ENCODE measurements at regions of chr6 and their contacts with region 1.

Region 1: DNA sequence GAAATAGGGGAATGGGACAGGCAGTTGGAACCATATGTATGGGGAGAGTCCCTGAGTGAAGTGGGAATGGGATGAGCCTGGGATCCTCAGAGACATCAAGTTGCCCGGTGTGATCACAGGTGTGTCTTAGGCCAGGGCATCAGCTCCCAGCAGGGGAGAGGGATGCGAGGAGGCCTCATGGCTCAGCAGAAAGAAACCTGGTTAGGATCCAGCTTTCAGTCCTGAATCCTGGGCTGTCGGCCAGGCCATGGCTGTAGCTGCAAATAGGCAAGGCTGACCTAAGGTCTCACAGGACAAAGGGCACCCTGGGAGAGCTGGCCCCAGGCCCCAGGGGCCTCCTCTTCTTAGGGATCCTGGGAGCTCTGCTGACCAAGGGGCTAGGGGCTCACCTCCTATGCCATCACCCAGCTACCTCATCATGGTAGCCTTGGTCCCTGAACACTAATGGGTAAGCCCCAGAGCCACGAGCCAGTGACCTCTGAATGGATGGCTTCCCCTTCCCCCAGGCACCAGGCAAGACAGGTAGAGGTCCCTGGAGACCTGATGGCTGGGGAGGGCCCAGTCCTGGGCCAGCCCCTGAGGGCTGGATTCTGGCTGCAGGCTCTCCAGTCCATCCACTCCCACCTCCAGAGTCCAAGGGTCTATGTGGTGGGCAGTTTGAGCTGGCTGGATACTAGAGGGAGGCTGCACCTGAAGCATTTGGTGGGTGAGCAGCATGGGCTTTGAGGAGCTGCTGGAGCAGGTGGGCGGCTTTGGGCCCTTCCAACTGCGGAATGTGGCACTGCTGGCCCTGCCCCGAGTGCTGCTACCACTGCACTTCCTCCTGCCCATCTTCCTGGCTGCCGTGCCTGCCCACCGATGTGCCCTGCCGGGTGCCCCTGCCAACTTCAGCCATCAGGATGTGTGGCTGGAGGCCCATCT is at the start of gene SLC22A7:
- DNase-seq: no peak
- H3K4me3 ChIP-seq: no peak within 1 kb of the TSS
- H3K27ac ChIP-seq: no peak within 1 kb of the TSS
- H3K4me1 ChIP-seq: no peaks in the 10 kb centered on the region
- H3K27me3 ChIP-seq: peaks cover 0 to 2% (median 0%) of the 10 kb centered on the region in 4 experiments; a peak in 1 of 7 replicates
- CTCF ChIP-seq: no peak
- EP300 ChIP-seq: no peak
- POLR2A ChIP-seq: no peak
- RAD21 ChIP-seq: no peak
- total RNA-seq, gene SLC22A7: not detected in 2 replicates

Region 2: GRCh38 chr6:43211955-43212354 is 85.9 kb before region 1 on chr6:
- CTCF ChIA-PET with region 1: no interaction called
- POLR2A ChIA-PET with region 1: no interaction called
- DNase-seq: no peak
- H3K4me3 ChIP-seq: no peak overlapping the region
- H3K27ac ChIP-seq: no peak overlapping the region
- H3K4me1 ChIP-seq: no peaks in the 10 kb centered on the region; a peak in 1 of 7 replicates
- H3K27me3 ChIP-seq: no peaks in the 10 kb centered on the region
- CTCF ChIP-seq: peak in 1 of 3 experiments; percentile 43; a peak in 1 of 4 replicates
- EP300 ChIP-seq: no peak
- POLR2A ChIP-seq: no peak
- RAD21 ChIP-seq: peak; percentile 27 to 42; a peak in 2 of 4 replicates

Region 3: GRCh38 chr6:43263314-43264178 is 34.4 kb before region 1 on chr6:
- CTCF ChIA-PET with region 1: interaction called, 10 read pairs
- POLR2A ChIA-PET with region 1: no interaction called
- DNase-seq: peak; percentile 49 to 90
- H3K4me3 ChIP-seq: no peak overlapping the region
- H3K27ac ChIP-seq: no peak overlapping the region
- H3K4me1 ChIP-seq: peaks cover 0 to 15% (median 5%) of the 10 kb centered on the region in 4 experiments; a peak in 6 of 7 replicates
- H3K27me3 ChIP-seq: peaks cover 2 to 9% (median 7%) of the 10 kb centered on the region in 4 experiments
- CTCF ChIP-seq: peak in 2 of 3 experiments; percentile 91 to 98; a peak in 3 of 4 replicates
- EP300 ChIP-seq: no peak
- POLR2A ChIP-seq: no peak
- RAD21 ChIP-seq: peak; percentile 96 to 97

Region 4: GRCh38 chr6:43308101-43308989 is 10.4 kb after region 1 on chr6 and contains the start of gene CRIP3:
- CTCF ChIA-PET with region 1: interaction called, 18 read pairs
- POLR2A ChIA-PET with region 1: interaction called, 45 read pairs
- DNase-seq: peak; percentile 60 to 86
- H3K4me3 ChIP-seq: peak within 1 kb of the TSS; percentile 51 to 74 (median 66)
- H3K27ac ChIP-seq: no peak within 1 kb of the TSS
- H3K4me1 ChIP-seq: peaks cover 9 to 15% (median 9%) of the 10 kb centered on the region in 4 experiments
- H3K27me3 ChIP-seq: 0 out of 7 replicates have a peak, but pooled peaks cover 0 to 2% (median 0%) of the 10 kb centered on the region in 4 experiments
- CTCF ChIP-seq: peak in 2 of 3 experiments; percentile 51 to 76; a peak in 2 of 4 replicates
- EP300 ChIP-seq: no peak
- POLR2A ChIP-seq: peak in 1 of 2 experiments; percentile 57; a peak in 2 of 3 replicates
- RAD21 ChIP-seq: peak; percentile 31 to 48; a peak in 3 of 4 replicates
- total RNA-seq, gene CRIP3: 37.6 and 46.3 TPM in 2 replicates

Region 5: GRCh38 chr6:43318011-43318410 is 20.1 kb after region 1 on chr6:
- CTCF ChIA-PET with region 1: interaction called, 18 read pairs
- POLR2A ChIA-PET with region 1: interaction called, 3 read pairs
- DNase-seq: no peak
- H3K4me3 ChIP-seq: no peak overlapping the region
- H3K27ac ChIP-seq: no peak overlapping the region
- H3K4me1 ChIP-seq: peaks cover 0 to 3% (median 0%) of the 10 kb centered on the region in 4 experiments; a peak in 3 of 7 replicates
- H3K27me3 ChIP-seq: no peaks in the 10 kb centered on the region
- CTCF ChIP-seq: no peak
- EP300 ChIP-seq: no peak
- POLR2A ChIP-seq: no peak
- RAD21 ChIP-seq: no peak

Region 6: DNA sequence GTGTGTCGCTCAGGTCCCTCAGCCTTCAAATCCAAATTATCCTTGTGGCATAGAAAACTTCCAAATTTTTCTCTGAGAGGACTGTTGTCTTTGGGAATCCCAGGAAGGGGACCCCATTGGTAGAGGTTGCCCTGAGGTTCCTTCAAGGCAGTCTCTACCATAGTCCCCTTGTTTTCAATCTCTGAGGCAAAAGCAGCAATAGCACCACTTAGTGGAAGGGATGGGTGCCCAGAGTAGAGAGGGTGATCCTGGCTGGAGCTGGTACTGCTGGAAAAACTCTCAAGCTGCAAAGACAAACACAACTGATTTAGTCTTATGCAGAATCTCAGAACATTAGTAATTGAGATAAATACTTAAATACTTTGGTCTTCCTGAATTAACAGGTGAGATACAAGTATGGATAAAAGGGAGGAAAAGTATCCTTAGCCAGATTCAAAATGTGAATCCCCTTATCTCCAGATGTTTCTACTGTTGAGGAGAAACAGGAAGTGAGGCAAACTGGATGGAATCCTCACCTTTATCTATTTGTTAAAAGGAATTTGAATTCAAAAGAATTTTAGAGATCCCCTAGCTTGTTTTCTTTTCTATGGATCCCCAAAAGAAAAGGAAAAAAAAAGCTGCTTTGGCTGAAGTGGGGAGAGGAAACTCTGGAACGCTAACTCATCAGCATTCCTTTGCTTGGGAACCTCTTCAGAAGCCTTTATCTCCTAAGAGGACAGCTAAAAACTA is 58.1 kb after region 1 on chr6:
- CTCF ChIA-PET with region 1: interaction called, 10 read pairs
- POLR2A ChIA-PET with region 1: interaction called, 3 read pairs
- DNase-seq: no peak
- H3K4me3 ChIP-seq: no peak overlapping the region; a peak in 1 of 8 replicates
- H3K27ac ChIP-seq: no peak overlapping the region
- H3K4me1 ChIP-seq: peaks cover 0 to 2% (median 0%) of the 10 kb centered on the region in 4 experiments; a peak in 2 of 7 replicates
- H3K27me3 ChIP-seq: no peaks in the 10 kb centered on the region
- CTCF ChIP-seq: peak; percentile 39 to 74 (median 66)
- EP300 ChIP-seq: no peak
- POLR2A ChIP-seq: no peak
- RAD21 ChIP-seq: peak; percentile 67 to 76

Measured in H1 (cell line).